Gastrocnemius medialis (tissue), 4 donors: ENCODE measurements at regions of chr15 and their contacts with region 1.

Region 1: DNA sequence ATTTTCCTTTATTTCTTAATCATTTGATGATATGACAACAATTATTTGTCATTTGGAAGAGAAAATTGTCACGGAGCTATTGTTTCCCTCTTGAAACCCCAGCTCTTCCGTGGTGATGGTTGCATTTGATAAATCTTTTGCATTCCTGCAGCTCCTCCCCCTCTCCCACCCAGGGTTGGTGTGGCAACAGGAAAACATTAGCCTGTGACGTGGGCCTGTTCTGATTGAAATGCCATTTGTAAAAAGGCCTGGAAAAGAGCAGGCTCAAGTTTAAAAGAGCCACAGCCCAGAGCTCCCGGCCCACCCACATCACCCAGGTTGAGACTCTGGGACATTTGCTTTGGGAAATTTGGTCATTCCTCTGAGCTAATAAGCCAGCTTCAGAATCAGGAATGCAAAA is 282.5 kb downstream of the RPLP1 start:
- DNase-seq: no peak
- ATAC-seq: no peak
- H3K4me3 ChIP-seq: no peak overlapping the region
- H3K27ac ChIP-seq: no peak overlapping the region
- H3K4me1 ChIP-seq: no peaks in the 10 kb centered on the region
- H3K27me3 ChIP-seq: no peaks in the 10 kb centered on the region
- CTCF ChIP-seq: no peak
- POLR2A ChIP-seq: no peak

Region 2: GRCh38 chr15:70474471-70475396 is 739.6 kb after region 1 on chr15:
- in situ Hi-C with region 1: loop called in 2 of 4 experiments (anchors 10 to 25 kb)
- intact Hi-C with region 1: no loop called
- DNase-seq: peak; percentile 49 to 57
- ATAC-seq: peak; percentile 82 to 84
- H3K4me3 ChIP-seq: peak overlapping the region; percentile 27 to 49 (median 33)
- H3K27ac ChIP-seq: peak overlapping the region; percentile 72 to 77 (median 73)
- H3K4me1 ChIP-seq: peaks cover 24 to 25% of the 10 kb centered on the region in 2 donors
- H3K27me3 ChIP-seq: no peaks in the 10 kb centered on the region
- CTCF ChIP-seq: no peak
- POLR2A ChIP-seq: no peak